ENCODE measurements at regions of chr1 and their contacts with region 1.

Region 1: DNA sequence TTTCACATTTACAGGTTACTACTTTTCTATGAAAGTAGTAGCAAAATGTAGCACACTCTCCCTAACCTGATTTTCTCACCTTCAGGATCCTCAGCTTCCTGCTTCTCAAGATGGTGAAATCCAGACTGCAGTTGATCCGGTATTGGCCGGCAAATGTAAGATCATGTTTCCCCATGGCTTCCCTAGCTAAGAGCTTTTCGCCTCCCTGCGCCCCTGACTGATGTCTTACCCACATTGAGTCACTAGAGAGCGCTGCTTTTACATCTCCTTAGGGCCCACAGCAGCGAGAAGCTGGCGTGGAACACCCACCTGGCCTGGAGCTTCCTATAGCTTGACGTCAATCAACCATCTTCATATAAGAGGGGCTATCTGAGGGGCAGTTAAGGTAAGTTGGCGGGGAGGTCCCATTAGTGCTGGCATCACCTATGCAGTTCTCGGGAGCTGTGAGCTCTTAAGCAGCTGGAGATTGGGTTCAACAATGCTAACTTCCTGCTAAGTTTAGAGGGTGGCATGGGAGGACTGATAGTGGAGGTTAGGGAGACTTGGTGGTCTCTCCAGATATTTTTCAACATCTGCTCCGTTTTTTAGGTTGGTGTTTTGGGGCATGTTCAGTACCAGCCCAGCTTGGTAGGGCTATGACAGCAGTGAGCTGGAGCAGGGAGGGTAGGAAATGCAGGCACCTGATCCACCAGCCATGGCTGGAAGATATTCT is 5.5 kb downstream of the PTPN7 start:
- DNase-seq: peak; percentile 71
- ATAC-seq: peak; percentile 68
- H3K4me3 Mint-ChIP-seq: no peak overlapping the region
- H3K27ac Mint-ChIP-seq: peak overlapping the region; percentile 75
- H3K4me1 Mint-ChIP-seq: peaks cover 48% of the 10 kb centered on the region
- H3K27me3 Mint-ChIP-seq: no peaks in the 10 kb centered on the region
- CTCF ChIP-seq: peak; percentile 72

Region 2: DNA sequence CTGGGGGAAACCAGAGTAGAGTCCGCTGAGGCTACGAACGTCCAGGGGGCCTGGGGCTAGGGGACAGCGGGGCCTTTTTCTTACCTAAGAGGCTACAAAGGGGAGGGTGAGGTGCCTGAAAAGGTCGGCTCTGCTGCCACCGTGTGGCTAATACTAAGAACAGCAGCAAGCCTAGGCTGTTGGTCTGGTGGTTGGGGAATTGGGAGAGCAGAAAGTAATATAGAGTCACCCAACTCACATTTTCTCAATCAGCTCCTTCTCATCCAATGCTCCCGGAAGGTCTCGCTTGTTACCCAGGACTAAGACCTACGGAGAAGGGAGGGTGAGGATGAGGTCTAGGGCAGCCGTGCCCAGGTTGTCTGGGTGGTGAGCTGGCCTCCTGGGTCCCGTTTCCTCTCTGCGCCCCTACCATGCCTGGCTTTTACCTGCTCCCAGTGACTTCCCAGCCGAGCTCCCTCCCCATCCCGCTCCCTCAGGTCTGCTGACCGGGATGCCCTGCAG is 19.7 kb before region 1 on chr1:
- CTCF ChIA-PET with region 1: interaction called, 20 read pairs
- POLR2A ChIA-PET with region 1: interaction called, 3 read pairs
- intact Hi-C with region 1: no loop called
- DNase-seq: peak; percentile 60
- ATAC-seq: peak; percentile 96
- H3K4me3 Mint-ChIP-seq: no peak overlapping the region
- H3K27ac Mint-ChIP-seq: no peak overlapping the region
- H3K4me1 Mint-ChIP-seq: no peaks in the 10 kb centered on the region
- H3K27me3 Mint-ChIP-seq: no peaks in the 10 kb centered on the region
- CTCF ChIP-seq: peak; percentile 90

Region 3: DNA sequence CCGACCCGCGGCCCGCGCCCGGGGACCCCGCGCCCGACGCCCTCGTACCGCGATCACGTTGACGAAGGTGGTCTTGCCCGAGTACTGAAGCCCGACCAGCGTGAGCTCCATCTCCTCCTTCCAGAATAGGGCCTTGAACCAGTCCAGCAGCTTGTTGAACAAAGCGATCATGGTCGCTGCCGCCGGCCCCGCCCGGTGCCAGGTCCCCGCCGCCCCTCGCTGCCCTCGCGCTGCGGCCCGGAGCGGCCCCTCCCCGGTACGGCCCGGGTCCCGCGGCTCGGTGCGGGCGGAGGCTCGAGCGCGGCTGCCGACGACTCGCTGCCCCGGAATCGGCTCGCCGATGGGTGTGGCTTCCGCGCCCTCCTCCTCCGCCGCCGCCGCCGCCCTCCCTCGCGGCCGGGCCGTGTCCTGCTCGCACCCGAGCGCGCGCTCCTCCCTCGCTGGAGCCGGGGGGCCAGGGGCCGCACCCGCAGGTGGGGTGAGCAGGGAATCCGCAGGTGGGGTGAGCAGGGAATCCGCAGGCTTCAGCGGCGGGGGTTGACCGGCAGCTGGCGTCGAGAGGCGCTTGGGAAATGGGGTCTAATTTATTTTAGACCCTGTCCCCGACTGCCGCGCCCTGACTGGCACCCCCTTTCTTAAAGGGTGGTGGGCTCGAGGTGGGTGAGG is 10.4 kb before region 1 on chr1 and contains the start of gene ARL8A:
- CTCF ChIA-PET with region 1: interaction called, 38 read pairs
- POLR2A ChIA-PET with region 1: interaction called, 124 read pairs
- intact Hi-C with region 1: no loop called
- DNase-seq: peak; percentile 73
- ATAC-seq: peak; percentile 69
- H3K4me3 Mint-ChIP-seq: peak within 1 kb of the TSS; percentile 95
- H3K27ac Mint-ChIP-seq: peak within 1 kb of the TSS; percentile 94
- H3K4me1 Mint-ChIP-seq: peaks cover 34% of the 10 kb centered on the region
- H3K27me3 Mint-ChIP-seq: no peaks in the 10 kb centered on the region
- CTCF ChIP-seq: no peak
- total RNA-seq, gene ARL8A: 25.8 to 33.7 TPM

Region 4: GRCh38 chr1:202176949-202177927 is 22.3 kb after region 1 on chr1:
- CTCF ChIA-PET with region 1: interaction called, 23 read pairs
- POLR2A ChIA-PET with region 1: interaction called, 16 read pairs
- intact Hi-C with region 1: no loop called
- DNase-seq: no peak
- ATAC-seq: no peak
- H3K4me3 Mint-ChIP-seq: no peak overlapping the region
- H3K27ac Mint-ChIP-seq: no peak overlapping the region
- H3K4me1 Mint-ChIP-seq: no peaks in the 10 kb centered on the region
- H3K27me3 Mint-ChIP-seq: no peaks in the 10 kb centered on the region
- CTCF ChIP-seq: no peak

Region 5: DNA sequence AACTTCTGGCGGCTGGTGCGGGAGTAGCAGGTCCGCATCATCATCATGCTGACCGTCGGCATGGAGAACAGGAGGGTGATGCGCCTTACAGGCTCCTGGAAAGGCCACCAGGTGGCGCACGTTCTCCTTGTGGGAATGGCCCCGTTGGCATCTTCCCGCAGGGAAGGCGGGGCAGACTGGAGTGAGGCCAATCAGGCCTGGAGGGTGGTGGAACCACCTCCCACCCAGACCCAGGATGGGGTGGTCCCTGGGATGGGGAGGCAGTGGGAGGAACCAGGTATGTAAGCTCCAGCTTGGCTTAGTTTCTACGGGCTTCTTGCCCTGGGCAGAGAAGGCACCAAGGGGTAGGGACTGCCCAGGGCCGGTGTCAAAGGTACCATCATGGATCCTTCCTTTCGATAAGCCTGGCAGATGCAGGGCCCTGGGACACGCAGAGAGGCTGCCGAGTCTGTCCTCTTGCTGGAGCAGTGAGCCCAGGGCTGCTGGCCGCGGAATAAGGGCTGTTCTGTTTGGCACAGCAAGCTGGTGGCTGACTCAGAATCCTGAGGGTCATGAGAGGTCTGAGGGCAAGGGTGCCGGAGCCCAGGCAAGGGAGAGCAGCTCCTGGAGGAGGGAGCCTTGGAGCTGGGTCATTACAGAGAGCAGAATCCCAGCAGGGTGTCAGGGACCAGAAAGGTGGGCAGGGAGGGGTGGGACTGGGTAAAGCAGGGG is 30.0 kb after region 1 on chr1:
- CTCF ChIA-PET with region 1: interaction called, 23 read pairs
- POLR2A ChIA-PET with region 1: interaction called, 4 read pairs
- intact Hi-C with region 1: no loop called
- DNase-seq: peak; percentile 80
- ATAC-seq: peak; percentile 62
- H3K4me3 Mint-ChIP-seq: no peak overlapping the region
- H3K27ac Mint-ChIP-seq: no peak overlapping the region
- H3K4me1 Mint-ChIP-seq: peaks cover 14% of the 10 kb centered on the region
- H3K27me3 Mint-ChIP-seq: no peaks in the 10 kb centered on the region
- CTCF ChIP-seq: peak; percentile 89